ENCODE measurements at regions of chr3 and their contacts with region 1.

Region 1: GRCh38 chr3:38136777-38137614 is at the start of gene ACAA1:
- DNase-seq: peak; percentile 100
- total RNA-seq, gene ACAA1: 29.8 to 41.9 TPM

Region 2: DNA sequence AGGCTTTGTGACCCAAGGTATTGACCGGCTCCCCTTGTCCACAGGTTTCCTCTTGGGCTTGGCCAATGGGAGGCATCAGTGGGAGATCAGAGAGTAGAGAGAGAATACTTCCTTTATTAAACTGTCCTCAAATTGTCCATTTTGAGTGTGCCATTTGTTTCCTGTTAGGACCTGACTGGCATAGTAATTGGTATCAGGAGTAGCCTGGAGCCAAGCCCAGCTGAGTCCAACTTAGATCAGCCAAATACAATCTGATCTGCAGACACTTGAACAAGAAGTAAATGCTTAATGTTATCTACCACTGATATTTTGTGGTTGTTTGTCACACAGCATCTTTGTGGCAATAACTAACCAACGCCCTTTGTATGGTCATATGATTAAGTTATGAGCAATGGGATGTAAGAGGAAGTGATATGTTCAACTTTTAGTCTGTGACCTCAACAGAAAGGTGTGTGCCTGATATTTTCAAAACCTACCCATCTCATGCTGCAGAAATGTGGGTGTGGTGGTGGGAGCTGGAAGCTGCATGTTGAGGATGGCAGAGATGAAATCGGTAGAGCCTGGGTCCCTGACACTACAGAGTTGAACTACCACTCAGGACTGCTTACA is 14.8 kb after region 1 on chr3:
- intact Hi-C with region 1: loop called in 1 of 2 experiments (anchors 1 kb)
- DNase-seq: no peak

Region 3: GRCh38 chr3:38247366-38248035 is 110.5 kb after region 1 on chr3:
- intact Hi-C with region 1: loop called in 1 of 2 experiments (anchors 10 kb)
- DNase-seq: no peak

Region 4: GRCh38 chr3:38404286-38404685 is 267.3 kb after region 1 on chr3:
- intact Hi-C with region 1: no loop called
- DNase-seq: no peak

Measured in posterior vena cava (tissue), 2 donors.